Activated naive CD4-positive, alpha-beta T cell treated with anti-CD3 and anti-CD28 coated beads, Interleukin-2, amount 10 ng/mL, durations not matched to agents 7 days and 5 days (primary cell): ENCODE measurements at regions of chr11 and their contacts with region 1.

Region 1: GRCh38 chr11:128157423-128158298 is 429.7 kb downstream of the ETS1 start:
- DNase-seq: peak; percentile 66
- H3K4me3 Mint-ChIP-seq: peak overlapping the region; percentile 60
- H3K27ac Mint-ChIP-seq: peak overlapping the region; percentile 63
- H3K4me1 Mint-ChIP-seq: peaks cover 7% of the 10 kb centered on the region
- H3K27me3 Mint-ChIP-seq: peaks cover 21% of the 10 kb centered on the region

Region 2: GRCh38 chr11:128021349-128022006 is 136.2 kb before region 1 on chr11:
- CTCF ChIA-PET with region 1: interaction called, 69 read pairs
- DNase-seq: no peak
- H3K4me3 Mint-ChIP-seq: no peak overlapping the region
- H3K27ac Mint-ChIP-seq: peak overlapping the region; percentile 34
- H3K4me1 Mint-ChIP-seq: peaks cover 8% of the 10 kb centered on the region
- H3K27me3 Mint-ChIP-seq: peaks cover 7% of the 10 kb centered on the region

Region 3: GRCh38 chr11:128039140-128040021 is 118.3 kb before region 1 on chr11:
- CTCF ChIA-PET with region 1: interaction called, 86 read pairs
- DNase-seq: peak; percentile 88
- H3K4me3 Mint-ChIP-seq: peak overlapping the region; percentile 60
- H3K27ac Mint-ChIP-seq: peak overlapping the region; percentile 96
- H3K4me1 Mint-ChIP-seq: peaks cover 49% of the 10 kb centered on the region
- H3K27me3 Mint-ChIP-seq: no peaks in the 10 kb centered on the region

Region 4: DNA sequence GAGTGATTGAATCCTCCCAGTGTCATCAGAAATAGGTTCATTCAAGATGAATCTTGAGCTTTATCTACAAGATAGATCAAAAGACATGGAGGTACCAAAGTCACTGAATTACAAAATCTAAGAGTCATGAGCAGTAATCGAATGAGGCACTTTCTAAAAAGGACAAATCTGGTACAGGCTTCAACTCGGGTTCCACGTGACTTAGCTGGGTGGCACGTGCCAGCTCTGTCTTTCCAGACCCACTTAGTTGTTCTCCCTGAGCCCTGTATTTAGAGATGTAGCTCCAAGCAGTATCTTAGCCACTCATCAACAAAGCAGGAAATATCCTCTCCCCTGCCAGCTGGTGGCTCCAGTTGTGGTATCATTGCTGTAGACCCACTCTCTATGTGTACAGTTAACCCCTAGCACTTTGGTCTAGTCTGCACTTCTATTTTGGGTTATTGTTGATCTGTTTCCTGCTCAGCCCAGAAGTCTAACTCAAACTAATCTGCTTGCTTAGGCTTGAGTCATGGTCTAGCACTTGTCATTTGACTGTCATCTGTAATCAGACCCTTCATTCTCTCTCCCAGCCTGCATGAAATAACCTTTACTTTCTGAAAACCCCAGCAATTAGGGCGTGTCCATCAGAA is 99.0 kb before region 1 on chr11:
- CTCF ChIA-PET with region 1: interaction called, 11 read pairs
- DNase-seq: no peak
- H3K4me3 Mint-ChIP-seq: no peak overlapping the region
- H3K27ac Mint-ChIP-seq: no peak overlapping the region
- H3K4me1 Mint-ChIP-seq: peaks cover 27% of the 10 kb centered on the region
- H3K27me3 Mint-ChIP-seq: no peaks in the 10 kb centered on the region

Region 5: GRCh38 chr11:128146926-128147605 is 10.6 kb before region 1 on chr11:
- CTCF ChIA-PET with region 1: interaction called, 16 read pairs
- DNase-seq: no peak
- H3K4me3 Mint-ChIP-seq: no peak overlapping the region
- H3K27ac Mint-ChIP-seq: no peak overlapping the region
- H3K4me1 Mint-ChIP-seq: no peaks in the 10 kb centered on the region
- H3K27me3 Mint-ChIP-seq: peaks cover 14% of the 10 kb centered on the region

Region 6: DNA sequence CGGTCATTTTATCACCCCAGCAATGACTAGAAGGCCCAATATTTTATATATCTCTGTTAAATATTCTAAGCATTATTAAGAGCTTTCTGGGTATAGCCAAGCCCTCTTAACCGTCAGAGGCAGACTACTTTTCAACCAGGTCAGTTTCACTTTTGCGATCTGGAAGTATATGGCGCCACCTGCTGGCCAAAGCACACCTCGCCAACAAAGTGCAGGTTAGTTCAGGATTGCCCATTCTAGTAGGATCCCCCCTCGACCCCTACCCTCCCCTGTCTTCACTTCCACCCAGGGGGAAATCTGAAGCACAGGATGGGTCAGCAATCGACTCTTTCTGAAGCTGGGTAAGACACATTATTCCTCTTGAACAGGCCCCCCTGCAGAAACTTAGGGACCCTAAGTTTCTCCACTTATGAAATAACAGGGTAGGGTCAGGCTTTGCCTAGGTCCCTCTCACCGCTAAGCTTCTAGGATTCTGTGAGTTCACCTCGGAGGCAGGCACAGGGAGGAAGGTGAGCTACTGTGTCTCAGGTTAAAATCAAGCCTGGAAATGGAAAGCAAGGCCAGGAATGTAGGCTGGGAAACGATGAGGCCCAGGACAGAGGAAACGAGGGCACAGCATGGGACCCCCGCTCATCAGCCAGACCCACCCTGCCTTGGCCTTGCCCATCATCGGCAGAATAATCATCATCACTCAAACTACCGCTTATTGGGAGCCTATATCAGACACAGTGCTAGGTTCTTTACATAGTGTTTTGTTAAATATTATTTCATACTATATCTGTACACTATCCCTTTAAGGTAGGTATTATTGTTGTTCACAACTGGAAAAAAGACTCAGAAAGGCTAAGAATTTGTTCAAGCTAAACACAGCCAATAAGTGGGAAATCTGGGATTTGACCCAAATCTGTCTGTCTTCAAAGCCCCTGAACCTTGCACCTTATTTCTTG is 673.8 kb after region 1 on chr11:
- CTCF ChIA-PET with region 1: interaction called, 30 read pairs
- DNase-seq: peak; percentile 91
- H3K4me3 Mint-ChIP-seq: peak overlapping the region; percentile 33
- H3K27ac Mint-ChIP-seq: peak overlapping the region; percentile 86
- H3K4me1 Mint-ChIP-seq: peaks cover 37% of the 10 kb centered on the region
- H3K27me3 Mint-ChIP-seq: peaks cover 8% of the 10 kb centered on the region